ENCODE measurements at regions of chr5 and their contacts with region 1.

Region 1: GRCh38 chr5:9125852-9126251 is 420.0 kb downstream of the SEMA5A start:
- DNase-seq: no peak
- ATAC-seq: no peak

Region 2: GRCh38 chr5:8897316-8897715 is 228.5 kb before region 1 on chr5:
- intact Hi-C with region 1: loop called (anchors 2 kb)
- DNase-seq: no peak
- ATAC-seq: no peak

Region 3: DNA sequence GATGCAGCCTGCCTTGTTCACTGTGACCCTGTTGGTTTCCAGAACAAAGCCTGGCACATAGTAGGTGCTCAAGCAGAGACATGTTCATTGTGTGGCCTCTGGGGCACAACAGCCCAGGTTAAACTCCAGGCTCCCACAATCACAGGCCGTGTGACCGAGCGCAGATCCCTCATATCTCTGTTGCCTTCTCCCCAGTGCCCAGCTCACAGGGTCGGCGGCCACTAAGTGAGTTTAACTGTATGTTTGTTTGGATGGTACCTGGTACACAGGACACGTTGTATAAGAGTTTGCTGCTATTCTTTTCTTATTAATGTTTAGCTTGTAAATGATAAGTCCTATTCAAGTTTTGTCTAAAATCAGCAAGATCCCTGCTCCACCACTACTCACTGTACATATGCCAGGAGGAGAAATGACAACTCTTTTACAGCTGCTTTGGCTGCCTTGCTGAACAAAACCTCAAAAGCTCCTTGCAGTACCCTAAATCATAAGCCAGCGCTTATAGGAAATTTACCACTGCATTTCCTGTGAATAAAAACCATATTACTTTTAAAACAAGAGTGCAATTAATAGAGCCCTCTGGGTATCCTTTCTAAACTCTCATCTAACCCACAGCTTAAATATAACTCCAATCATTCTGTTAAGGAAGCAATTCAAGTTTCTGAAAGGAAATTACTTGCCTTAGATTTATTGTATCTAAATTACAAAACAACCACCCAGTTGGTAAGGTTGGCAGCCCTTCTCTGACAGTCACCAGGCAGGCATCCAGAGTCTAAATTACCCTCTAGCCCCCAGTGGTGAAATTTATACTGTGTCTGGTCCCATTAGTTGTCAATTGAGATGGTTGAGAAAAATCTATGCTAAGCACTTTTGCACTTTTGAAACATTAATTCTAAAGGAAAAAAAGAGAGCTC is 40.6 kb after region 1 on chr5:
- intact Hi-C with region 1: no loop called
- DNase-seq: no peak
- ATAC-seq: no peak